WTC11 (cell line): ENCODE measurements at regions of chr5 and their contacts with region 1.

Region 1: DNA sequence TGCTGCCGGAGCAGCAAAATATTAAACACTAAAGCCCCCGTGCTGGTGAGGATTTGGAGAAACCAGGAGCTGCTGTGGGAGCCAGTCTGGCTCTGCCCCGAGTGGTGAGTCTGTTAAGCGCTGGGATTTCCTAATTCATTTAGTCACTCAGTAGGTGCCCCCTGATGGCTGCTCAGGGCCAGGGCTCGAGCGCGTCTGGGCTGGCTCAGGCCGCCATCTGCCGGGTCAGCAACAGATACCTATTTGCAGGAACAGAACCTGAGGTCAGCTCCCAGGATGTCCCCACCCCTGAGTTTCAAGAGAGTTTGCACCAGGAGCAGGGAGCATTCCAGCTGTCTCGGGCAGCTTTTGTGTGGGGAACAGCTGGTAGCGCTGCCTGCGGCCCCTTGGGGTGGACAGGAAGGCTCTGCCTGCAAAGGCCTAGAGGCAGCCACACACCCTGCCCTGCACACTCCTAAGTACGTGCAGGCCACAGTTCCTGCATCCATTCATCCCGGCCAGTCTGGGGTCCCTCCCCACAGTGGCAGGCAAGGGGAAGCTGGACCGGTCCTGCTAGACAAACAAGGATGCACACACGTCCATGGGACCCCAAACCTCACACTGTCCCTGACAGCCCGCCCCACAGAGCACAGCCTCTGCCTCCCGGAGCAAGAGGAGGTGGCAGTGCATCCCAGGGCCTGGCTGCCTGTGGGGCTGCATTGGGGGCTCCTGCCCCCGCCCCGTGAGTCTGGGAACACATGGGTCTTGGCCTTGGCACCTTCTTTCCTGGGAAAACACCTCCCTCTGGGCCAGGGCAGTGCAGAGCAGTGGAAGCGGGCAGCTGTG is 83.7 kb downstream of the ADAMTS2 start:
- DNase-seq: peak; percentile 84
- ATAC-seq: peak; percentile 92
- H3K4me3 Mint-ChIP-seq: no peak overlapping the region
- H3K27ac Mint-ChIP-seq: peak overlapping the region; percentile 66; the same call in 1 of the 2 replicates
- H3K4me1 Mint-ChIP-seq: peaks cover 14% of the 10 kb centered on the region
- H3K27me3 Mint-ChIP-seq: no peaks in the 10 kb centered on the region
- CTCF ChIP-seq: no peak

Region 2: GRCh38 chr5:179142434-179143198 is 118.9 kb before region 1 on chr5:
- CTCF ChIA-PET with region 1: interaction called, 11 read pairs
- POLR2A ChIA-PET with region 1: no interaction called
- DNase-seq: no peak
- ATAC-seq: no peak
- H3K4me3 Mint-ChIP-seq: no peak overlapping the region
- H3K27ac Mint-ChIP-seq: no peak overlapping the region
- H3K4me1 Mint-ChIP-seq: no peaks in the 10 kb centered on the region
- H3K27me3 Mint-ChIP-seq: no peaks in the 10 kb centered on the region
- CTCF ChIP-seq: no peak

Region 3: DNA sequence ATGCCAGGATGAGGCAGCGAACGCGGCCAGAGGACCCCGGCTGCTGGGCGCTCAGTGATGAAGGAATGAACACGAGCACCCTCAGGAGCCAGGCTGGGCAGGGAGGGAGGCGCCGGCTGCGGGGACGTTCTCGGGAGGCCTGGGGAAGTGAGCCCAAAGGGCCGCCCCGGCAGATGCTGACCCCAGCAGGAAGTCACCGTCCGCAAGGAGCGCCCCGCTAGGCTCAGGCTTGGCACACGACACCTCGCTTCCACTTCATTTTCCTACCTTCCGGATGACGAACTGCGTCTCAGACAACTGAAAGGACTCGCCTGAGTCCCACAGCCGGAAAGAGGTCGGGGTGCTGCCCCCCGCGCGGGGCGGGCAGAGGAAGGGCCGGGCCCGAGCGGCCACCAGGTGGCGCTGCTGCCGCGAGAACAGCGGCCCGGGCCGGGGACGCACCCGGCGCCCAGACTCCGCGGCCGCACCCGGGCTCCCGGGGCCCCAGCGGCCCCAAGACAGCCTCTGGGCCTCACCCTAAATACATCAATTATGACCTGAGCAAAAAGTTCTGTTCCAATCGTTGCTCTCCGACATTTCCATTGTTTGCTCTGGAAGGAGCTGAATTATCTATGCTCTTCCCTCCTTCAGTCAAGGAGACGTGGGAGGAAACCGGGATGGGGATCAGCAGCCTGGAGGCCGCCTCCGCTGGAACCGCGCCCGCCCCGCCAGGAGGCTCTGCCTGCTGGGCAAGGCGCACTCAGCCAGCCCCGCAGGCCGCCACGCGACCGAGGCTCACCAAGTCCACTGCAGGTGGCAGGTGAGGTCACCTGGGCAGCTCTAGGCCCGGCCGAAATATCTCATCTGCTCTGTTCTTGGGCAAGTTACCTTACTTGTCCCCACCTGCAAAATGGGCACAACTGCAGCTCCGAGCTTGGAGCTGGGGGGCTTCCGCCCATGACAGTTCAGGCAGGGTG is 94.3 kb before region 1 on chr5:
- CTCF ChIA-PET with region 1: interaction called, 38 read pairs
- POLR2A ChIA-PET with region 1: interaction called, 3 read pairs
- DNase-seq: peak; percentile 74
- ATAC-seq: peak; percentile 89
- H3K4me3 Mint-ChIP-seq: peak overlapping the region; percentile 40; the same call in 1 of the 2 replicates
- H3K27ac Mint-ChIP-seq: no peak overlapping the region
- H3K4me1 Mint-ChIP-seq: no peaks in the 10 kb centered on the region
- H3K27me3 Mint-ChIP-seq: no peaks in the 10 kb centered on the region; the same call in 1 of the 2 replicates
- CTCF ChIP-seq: peak; percentile 90

Region 4: DNA sequence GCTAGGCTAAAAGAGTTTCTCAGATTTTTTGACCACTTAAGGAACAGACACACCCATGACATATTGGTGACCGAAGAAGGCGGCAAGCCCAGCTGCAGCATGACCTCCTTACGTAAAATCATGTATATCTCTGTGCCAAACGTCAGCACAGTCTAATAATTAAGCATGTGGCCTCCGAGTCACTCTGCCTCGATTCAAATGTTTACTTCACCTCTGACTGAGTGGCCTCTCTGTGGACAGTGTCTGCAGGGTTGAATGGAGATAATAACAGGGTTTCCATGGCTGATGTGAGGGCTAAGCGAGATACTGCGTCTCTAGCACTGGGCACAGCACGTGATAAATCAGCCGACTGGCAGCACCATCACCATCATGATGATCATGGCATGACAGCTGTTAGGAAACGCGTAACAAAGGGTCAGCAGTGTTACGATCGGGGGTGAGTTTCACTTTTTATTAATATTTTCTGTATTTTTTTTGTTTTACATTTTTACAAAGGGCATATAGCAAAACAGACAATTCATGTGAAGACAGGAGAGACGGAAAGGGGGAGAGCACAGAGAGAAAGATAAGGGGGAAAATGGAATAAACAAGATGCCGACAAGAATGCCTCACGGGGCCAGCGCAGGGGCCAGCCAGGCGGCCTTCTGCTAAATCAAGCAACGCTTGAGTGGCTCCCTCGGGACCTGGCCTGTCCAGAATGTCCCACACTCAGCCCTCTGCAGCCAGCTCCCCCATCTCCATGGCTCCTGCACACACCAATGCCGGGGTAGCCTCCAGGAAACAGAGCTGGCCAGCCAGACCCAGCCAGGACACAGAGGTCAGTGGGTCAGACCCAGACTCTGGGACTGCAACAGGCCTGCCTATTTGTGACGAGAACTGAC is 23.5 kb after region 1 on chr5:
- CTCF ChIA-PET with region 1: no interaction called
- POLR2A ChIA-PET with region 1: no interaction called
- DNase-seq: no peak
- ATAC-seq: no peak
- H3K4me3 Mint-ChIP-seq: no peak overlapping the region
- H3K27ac Mint-ChIP-seq: peak overlapping the region; percentile 61
- H3K4me1 Mint-ChIP-seq: 0 out of 2 replicates have a peak, but pooled peaks cover 5% of the 10 kb centered on the region
- H3K27me3 Mint-ChIP-seq: no peaks in the 10 kb centered on the region
- CTCF ChIP-seq: no peak